ENCODE measurements at regions of chr19 and their contacts with region 1.

Region 1: DNA sequence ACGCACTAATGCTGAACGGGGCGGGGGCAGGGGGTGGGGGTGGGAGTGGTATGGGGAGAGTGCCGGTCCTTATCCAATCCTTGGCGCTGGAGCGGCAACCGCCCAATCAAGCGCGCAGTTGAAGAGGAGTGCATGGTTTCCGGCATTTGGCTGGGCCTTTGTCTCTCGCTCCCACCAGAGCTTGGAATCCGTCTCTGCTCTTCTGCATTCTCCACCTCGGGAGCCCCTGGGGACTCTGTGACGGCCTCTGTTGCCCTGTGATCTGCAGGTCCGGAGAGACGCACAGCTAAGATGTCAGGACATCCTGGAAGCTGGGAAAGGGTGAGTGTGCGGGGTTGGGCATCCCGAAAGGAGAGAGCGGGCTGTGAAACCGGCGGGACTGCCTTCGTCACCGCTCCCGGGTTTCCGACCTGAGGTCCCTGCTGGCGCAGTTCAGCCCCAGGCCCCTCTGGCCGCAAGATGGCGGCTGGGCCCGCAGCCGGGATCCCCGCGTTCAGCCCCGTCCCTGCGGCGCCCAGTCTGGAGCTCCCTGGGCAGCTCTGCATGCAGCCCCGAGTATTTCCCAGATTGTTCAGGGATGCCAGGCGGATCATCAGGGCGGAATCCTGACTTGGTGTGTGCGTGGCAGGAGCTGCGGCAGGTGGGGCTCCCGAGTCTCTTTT is 53.6 kb upstream of the ZNF254 start:
- DNase-seq: peak; percentile 77 to 91 (median 83)
- H3K4me3 ChIP-seq: peak overlapping the region; percentile 99
- H3K4me3 Mint-ChIP-seq: peak overlapping the region; percentile 99 to 100 (median 100)
- H3K27ac ChIP-seq: peak overlapping the region; percentile 89
- H3K27ac Mint-ChIP-seq: peak overlapping the region; percentile 91 to 100 (median 99)
- H3K4me1 ChIP-seq: peaks cover 45% of the 10 kb centered on the region
- H3K4me1 Mint-ChIP-seq: peaks cover 44 to 86% (median 54%) of the 10 kb centered on the region in 3 donors
- H3K27me3 ChIP-seq: no peaks in the 10 kb centered on the region
- H3K27me3 Mint-ChIP-seq: no peaks in the 10 kb centered on the region

Region 2: DNA sequence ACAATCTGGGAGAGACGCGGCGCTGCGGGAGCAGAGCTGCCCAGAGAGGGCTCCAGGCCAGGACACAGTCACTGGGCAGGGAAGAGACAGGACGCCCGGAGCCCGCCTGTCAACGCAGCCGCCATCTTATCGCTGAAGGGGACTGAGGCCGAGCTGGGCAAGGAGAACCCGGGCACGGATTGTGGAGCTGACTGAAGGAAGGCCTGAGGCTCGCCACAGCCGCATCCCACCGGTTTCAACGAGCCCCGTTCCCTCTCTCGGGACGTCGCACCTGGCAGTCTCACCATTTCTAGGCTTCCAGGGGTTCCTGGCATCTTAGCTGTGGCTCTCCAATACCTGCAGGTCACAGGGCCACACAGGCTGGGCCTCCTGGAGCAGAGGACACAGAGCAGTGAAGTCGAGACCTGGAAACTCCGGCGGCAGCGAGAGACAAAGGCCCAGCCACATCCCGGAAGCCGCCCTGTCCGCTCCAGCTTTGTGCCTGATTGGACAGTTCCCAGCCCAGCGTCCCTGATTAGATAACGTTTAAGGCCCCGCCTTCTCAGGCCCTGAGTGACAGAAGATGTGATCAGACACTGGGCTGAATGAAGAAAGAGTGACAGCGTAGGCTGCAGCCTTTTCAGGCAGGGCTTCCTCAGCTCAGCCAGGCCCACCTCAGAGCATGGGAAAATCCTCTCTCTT is 638.3 kb before region 1 on chr19 and contains the start of gene ZNF91:
- CTCF ChIA-PET with region 1: no interaction called
- POLR2A ChIA-PET with region 1: interaction called, 10 read pairs
- DNase-seq: peak; percentile 88 to 95 (median 92)
- H3K4me3 ChIP-seq: peak within 1 kb of the TSS; percentile 92
- H3K4me3 Mint-ChIP-seq: peak within 1 kb of the TSS; percentile 98 to 100 (median 99)
- H3K27ac ChIP-seq: peak within 1 kb of the TSS; percentile 94
- H3K27ac Mint-ChIP-seq: peak within 1 kb of the TSS; percentile 97 to 100 (median 98)
- H3K4me1 ChIP-seq: peaks cover 24% of the 10 kb centered on the region
- H3K4me1 Mint-ChIP-seq: peaks cover 37 to 43% (median 37%) of the 10 kb centered on the region in 3 donors
- H3K27me3 ChIP-seq: no peaks in the 10 kb centered on the region
- H3K27me3 Mint-ChIP-seq: peaks cover 0 to 2% of the 10 kb centered on the region in 2 donors
- total RNA-seq, gene ZNF91: 27.6 to 31.3 TPM

Region 3: GRCh38 chr19:23914402-23915301 is 118.8 kb before region 1 on chr19 and contains the start of gene ZNF726:
- CTCF ChIA-PET with region 1: no interaction called
- POLR2A ChIA-PET with region 1: interaction called, 20 read pairs
- DNase-seq: peak; percentile 74 to 91 (median 86)
- H3K4me3 ChIP-seq: peak within 1 kb of the TSS; percentile 86
- H3K4me3 Mint-ChIP-seq: peak within 1 kb of the TSS; percentile 86 to 96 (median 93)
- H3K27ac ChIP-seq: peak within 1 kb of the TSS; percentile 57
- H3K27ac Mint-ChIP-seq: peak within 1 kb of the TSS; percentile 80 to 98 (median 90)
- H3K4me1 ChIP-seq: peaks cover 6% of the 10 kb centered on the region
- H3K4me1 Mint-ChIP-seq: peaks cover 17 to 21% (median 17%) of the 10 kb centered on the region in 3 donors
- H3K27me3 ChIP-seq: no peaks in the 10 kb centered on the region
- H3K27me3 Mint-ChIP-seq: no peaks in the 10 kb centered on the region
- total RNA-seq, gene ZNF726: 12.6 to 13.1 TPM

Region 4: GRCh38 chr19:23971598-23971997 is 61.8 kb before region 1 on chr19:
- CTCF ChIA-PET with region 1: no interaction called
- POLR2A ChIA-PET with region 1: no interaction called
- DNase-seq: no peak
- H3K4me3 ChIP-seq: no peak overlapping the region
- H3K4me3 Mint-ChIP-seq: peak overlapping the region in 3 of 7 donors; percentile 19 to 38 (median 36)
- H3K27ac ChIP-seq: no peak overlapping the region
- H3K27ac Mint-ChIP-seq: no peak overlapping the region
- H3K4me1 ChIP-seq: no peaks in the 10 kb centered on the region
- H3K4me1 Mint-ChIP-seq: peaks cover 5 to 6% (median 5%) of the 10 kb centered on the region in 3 donors
- H3K27me3 ChIP-seq: no peaks in the 10 kb centered on the region
- H3K27me3 Mint-ChIP-seq: peaks cover 21 to 40% of the 10 kb centered on the region in 2 donors

Region 5: DNA sequence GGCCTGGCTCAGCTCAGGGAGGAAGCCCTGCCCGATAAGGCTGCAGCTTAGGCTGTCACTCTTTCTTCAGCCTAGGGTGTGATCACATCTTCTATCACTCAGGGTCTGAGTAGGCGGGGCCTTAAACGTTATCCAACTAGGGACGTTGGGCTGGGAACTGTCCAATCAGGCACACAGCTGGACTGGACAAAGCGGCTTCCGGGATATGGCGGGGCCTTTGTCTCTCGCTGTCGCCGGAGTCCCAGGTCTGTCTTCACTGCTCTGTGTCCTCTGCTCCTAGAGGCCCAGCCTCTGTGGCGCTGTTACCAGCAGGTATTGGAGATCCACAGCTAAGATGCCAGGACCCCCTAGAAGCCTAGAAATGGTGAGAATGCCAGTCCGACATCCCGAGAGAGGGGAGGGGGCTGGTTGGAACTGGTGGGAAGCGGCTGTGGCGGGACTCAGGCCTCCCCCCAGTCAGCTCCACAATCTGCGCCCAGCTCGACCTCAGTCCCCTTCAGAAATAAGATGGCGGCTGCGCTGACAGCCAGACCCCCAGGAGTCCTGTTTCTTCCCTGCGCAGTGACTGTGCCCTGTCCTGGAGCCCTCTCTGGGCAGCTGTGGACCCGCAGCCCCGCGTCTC is 53.7 kb after region 1 on chr19 and contains the start of gene ZNF254:
- CTCF ChIA-PET with region 1: interaction called, 6 read pairs
- POLR2A ChIA-PET with region 1: interaction called, 19 read pairs
- DNase-seq: peak; percentile 65 to 86 (median 72)
- H3K4me3 ChIP-seq: peak within 1 kb of the TSS; percentile 80
- H3K4me3 Mint-ChIP-seq: peak within 1 kb of the TSS; percentile 90 to 98 (median 94)
- H3K27ac ChIP-seq: peak within 1 kb of the TSS; percentile 82
- H3K27ac Mint-ChIP-seq: peak within 1 kb of the TSS; percentile 82 to 98 (median 93)
- H3K4me1 ChIP-seq: peaks cover 9% of the 10 kb centered on the region
- H3K4me1 Mint-ChIP-seq: peaks cover 12 to 27% (median 13%) of the 10 kb centered on the region in 3 donors
- H3K27me3 ChIP-seq: no peaks in the 10 kb centered on the region
- H3K27me3 Mint-ChIP-seq: no peaks in the 10 kb centered on the region
- total RNA-seq, gene ZNF254: 7.3 to 9.7 TPM